Posterior cingulate gyrus (tissue), 11 donors: ENCODE measurements at regions of chr11 and their contacts with region 1.

Region 1: DNA sequence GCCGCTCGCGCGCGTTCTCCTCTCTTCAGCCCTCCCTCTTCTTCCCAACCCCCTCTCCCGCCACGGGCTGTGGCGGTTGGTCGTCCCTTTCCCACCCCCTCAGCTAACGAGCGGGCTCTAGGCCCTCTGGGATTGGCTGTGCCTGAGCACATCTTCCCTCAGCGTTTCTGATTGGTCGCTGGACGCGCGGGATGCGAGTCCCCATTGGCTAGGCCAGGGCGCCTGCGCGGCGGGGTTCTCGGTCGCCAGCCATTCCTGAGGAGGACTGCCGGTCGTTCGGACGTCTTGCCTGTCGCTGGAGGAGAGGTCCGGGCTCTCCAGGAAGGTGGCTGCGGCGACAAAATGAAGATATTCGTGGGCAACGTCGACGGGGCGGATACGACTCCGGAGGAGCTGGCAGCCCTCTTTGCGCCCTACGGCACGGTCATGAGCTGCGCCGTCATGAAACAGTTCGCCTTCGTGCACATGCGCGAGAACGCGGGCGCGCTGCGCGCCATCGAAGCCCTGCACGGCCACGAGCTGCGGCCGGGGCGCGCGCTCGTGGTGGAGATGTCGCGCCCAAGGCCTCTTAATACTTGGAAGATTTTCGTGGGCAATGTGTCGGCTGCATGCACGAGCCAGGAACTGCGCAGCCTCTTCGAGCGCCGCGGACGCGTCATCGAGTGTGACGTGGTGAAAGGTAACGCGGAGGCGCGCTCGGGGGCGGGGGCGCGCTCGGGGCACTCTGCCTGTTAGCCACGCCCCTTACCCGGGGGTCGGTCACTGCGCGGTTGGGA is at the start of gene RBM14:
- DNase-seq: peak; percentile 97 to 100 (median 98)

Region 2: DNA sequence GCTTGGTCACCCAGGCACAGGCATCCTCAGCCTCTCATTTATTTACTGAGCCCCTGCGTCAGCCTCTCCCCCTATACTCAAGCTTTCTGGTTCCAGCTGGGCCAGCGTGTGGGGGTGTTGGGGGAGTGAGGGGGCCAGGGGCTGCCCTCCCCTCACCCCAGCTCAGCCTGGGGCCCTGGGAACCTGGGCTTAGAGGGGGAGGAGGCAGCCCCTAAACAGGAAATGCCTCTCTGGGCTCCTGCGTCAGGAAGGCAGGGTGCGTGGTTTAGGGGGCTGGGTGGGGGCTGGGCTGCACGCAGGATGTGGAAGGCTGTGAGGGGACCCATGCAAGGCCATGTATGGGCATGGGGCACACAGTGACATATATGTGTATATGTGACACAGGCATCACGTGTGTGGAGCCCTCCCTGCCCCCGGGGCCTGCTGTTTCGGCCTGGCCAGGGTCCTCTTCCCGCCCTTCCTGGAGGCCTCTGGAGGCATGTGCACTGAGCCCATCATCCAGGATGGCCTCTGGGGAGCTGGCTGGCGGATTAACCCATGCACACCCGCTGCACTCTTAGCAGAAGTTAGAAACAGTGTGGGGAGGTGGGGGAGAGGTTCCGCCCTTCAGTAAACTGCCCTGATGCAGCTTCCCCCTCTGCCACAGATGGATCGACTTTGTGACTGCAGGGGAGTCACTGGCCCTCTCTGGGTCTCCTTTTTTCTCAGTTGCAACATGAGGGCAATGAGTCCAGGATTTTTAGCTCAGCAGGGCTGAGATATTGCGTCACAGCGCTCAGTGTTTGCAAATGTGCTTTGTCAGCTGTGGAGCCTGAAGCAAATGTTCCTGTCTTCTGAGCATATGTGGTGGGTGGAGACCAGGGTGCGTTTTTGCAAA is 298.6 kb before region 1 on chr11:
- intact Hi-C with region 1: no loop called
- DNase-seq: peak in 3 of 10 donors; percentile 41 to 92 (median 45)

Region 3: DNA sequence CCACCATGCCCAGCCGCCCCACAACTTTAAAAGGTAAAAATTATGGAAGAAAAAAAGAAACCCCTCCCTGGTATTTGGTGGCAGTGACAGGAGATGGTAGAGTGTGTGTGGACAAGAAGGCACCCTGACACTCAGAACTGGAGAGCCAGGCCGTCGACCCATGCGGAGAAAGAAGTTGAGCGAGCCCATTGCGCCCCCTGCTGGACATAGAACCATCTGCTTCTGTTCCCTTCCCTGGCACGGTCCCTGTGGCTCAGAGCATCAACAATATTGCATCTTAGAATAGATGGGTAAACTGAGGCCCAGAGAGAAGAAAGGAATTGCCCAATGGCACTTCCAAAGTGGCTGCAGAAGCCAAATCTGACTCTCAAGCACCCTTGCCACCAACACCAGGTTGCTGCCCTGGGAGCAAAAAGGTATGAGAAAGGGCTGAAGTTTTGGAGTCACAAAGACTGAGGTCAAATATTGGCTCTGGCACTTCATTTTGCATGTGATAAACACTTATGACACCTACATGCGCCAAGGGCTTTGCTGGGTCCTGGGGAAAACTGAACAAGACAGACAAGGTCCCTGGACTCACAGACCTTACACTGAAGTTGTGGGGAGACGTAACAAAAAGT is 186.5 kb before region 1 on chr11:
- intact Hi-C with region 1: no loop called
- DNase-seq: peak; percentile 63 to 97 (median 82)

Region 4: GRCh38 chr11:66592457-66593302 is 23.9 kb before region 1 on chr11 and contains the starts of genes CCDC87 and CCS:
- intact Hi-C with region 1: loop called (anchors 2 kb)
- DNase-seq: peak; percentile 92 to 99 (median 98)

Region 5: GRCh38 chr11:66638177-66639065 is 21.9 kb after region 1 on chr11 and contains the start of gene RBM4:
- intact Hi-C with region 1: loop called (anchors 1 kb)
- DNase-seq: peak; percentile 97 to 100 (median 99)